ENCODE measurements at regions of chr4 and their contacts with region 1.

Region 1: GRCh38 chr4:145936142-145936996 is 2.3 kb downstream of the ZNF827 start:
- DNase-seq: peak; percentile 74 to 82 (median 78)
- ATAC-seq: peak; percentile 34 to 76 (median 66)
- H3K4me3 ChIP-seq: peak overlapping the region; percentile 70 to 93 (median 80)
- H3K27ac ChIP-seq: peak overlapping the region; percentile 92 to 99 (median 96)
- H3K4me1 ChIP-seq: peaks cover 0 to 31% (median 19%) of the 10 kb centered on the region in 12 donors
- H3K27me3 ChIP-seq: no peaks in the 10 kb centered on the region
- CTCF ChIP-seq: peak in 7 of 12 donors; percentile 10 to 28 (median 12)
- POLR2A ChIP-seq: peak in 1 of 2 donors; percentile 28

Region 2: DNA sequence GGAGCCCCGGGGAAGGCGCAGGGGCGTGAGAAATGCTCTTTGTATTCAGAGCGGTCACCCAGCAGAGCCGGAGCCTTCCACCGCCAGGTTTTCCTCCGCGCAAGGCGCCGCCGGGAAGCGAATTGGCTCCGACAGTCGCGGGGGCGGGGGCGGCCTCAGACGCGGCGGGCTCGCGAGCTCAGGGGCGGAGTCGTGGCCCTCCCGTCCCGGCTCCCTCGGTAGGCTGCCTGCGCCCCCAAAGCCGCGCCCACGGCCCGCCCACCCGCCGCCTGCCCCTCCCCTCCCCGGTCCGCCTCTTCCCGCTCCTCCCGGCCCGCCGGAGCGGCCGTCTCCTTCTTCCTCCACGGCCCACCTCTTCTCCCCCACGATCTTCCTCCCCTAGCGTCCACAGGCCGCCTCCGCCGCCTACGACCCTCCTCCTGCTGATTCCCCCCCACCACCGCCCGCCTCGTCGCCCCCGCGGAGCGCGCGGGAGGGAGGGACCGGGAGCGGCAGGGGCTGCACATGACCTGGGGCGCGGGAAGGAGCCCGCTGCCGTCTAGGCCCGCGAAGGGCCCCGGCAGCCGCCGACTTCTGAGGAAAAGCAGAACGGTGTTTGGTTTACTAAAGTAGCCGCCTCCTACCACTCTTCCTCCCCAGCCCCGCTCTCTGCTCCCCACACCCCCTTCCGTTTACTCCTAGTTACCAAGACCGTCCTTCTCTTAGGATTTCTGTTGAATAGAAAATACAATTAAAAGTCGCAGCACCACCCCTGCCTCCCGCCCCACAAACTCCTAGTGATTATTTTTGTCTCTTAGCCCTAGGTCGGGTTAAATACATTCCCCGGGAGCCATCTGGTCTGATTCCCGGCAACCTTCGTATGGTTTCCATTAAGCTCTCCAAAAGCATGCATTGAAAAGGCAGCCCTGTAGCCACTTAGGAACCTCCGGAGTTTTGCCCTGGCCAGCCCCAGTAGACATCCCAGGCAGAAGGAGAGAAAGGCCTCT is 203.2 kb before region 1 on chr4:
- intact Hi-C with region 1: loop called in 6 of 10 experiments (anchors 2 to 10 kb)
- DNase-seq: peak; percentile 97
- ATAC-seq: peak; percentile 81 to 96 (median 93)
- H3K4me3 ChIP-seq: peak overlapping the region; percentile 8 to 82 (median 66)
- H3K27ac ChIP-seq: peak overlapping the region; percentile 88 to 99 (median 96)
- H3K4me1 ChIP-seq: peaks cover 13 to 57% (median 46%) of the 10 kb centered on the region in 12 donors
- H3K27me3 ChIP-seq: no peaks in the 10 kb centered on the region
- CTCF ChIP-seq: peak in 3 of 12 donors; percentile 2 to 36 (median 14)
- POLR2A ChIP-seq: peak in 1 of 2 donors; percentile 76

Region 3: DNA sequence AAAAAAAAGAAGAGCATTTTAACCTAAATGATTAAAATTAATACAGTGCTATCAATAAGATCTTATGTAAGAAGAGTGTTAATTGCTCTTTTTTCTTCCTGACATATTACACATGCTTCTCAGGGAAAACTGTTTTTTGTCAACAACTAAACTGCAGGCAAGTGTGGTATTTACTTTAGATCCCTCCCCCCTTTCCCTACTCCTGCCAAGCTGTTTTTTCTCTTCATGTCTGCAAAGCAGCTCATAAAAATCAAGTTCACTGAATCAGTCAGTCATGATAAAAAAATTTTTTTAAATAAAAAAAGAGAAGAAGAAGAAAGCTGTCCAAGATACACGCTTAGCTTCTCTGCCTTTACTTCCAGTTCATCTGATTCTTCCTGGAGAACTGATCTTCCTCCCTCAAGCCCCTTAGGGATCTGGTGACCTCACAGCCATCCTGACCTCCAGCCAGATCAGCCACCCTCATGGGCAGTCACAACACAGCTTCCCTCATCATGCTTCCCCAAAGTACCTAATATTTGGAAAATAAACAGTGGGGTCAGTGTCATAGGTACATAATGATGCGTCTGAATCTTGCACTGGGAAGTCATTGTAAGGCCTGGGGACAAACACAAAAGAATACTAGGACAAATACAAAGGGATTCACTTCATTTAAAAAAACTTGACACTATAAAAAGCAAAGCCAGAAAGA is 84.7 kb before region 1 on chr4:
- intact Hi-C with region 1: loop called in 3 of 10 experiments (anchors 10 kb)
- DNase-seq: no peak
- ATAC-seq: peak in 1 of 4 donors; percentile 54
- H3K4me3 ChIP-seq: no peak overlapping the region
- H3K27ac ChIP-seq: peak overlapping the region in 2 of 12 donors; percentile 15 to 21
- H3K4me1 ChIP-seq: peaks cover 0 to 21% (median 15%) of the 10 kb centered on the region in 12 donors
- H3K27me3 ChIP-seq: no peaks in the 10 kb centered on the region
- CTCF ChIP-seq: no peak
- POLR2A ChIP-seq: no peak

Region 4: DNA sequence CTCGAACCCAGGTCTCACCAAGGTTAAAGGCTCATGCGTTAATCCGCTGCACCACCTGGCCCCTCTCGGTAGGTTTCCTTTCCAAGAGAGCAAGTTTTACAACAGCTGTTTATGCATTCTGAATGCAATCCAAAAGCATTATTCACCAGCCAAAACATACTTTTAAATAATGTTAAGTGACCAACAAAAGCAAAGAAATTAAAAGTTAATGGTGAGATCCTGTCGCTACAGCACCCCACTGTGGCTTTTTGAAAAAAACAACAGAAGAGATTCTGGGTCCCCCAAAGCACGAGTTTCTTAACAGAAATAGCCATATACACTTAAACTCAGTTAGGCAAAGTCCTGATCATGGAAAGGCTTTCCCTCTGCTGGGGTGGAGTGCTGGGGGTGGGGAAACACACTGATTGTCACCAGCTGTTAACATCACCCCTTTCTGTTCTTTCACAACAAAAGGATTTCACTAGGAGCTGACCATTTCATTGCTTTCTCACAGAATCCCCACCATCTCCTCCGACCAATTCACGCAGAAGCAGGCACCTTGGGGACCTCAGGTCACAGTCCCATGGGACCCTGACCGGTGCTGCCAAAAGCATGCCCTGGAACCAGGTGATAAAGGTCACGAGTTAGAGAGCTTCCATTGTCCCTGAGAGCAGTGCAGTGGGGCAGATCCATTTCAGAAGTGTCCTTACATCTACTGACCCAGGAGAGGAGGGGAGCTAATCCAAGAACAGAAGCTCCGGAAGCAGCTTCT is 49.0 kb before region 1 on chr4:
- intact Hi-C with region 1: loop called in 4 of 10 experiments (anchors 5 to 10 kb)
- DNase-seq: peak in 2 of 5 donors; percentile 25 to 45
- ATAC-seq: peak; percentile 38 to 78 (median 56)
- H3K4me3 ChIP-seq: peak overlapping the region in 1 of 12 donors; percentile 2
- H3K27ac ChIP-seq: peak overlapping the region in 10 of 12 donors; percentile 34 to 77 (median 54)
- H3K4me1 ChIP-seq: peaks cover 3 to 38% (median 20%) of the 10 kb centered on the region in 12 donors
- H3K27me3 ChIP-seq: no peaks in the 10 kb centered on the region
- CTCF ChIP-seq: peak in 7 of 12 donors; percentile 10 to 46 (median 35)
- POLR2A ChIP-seq: no peak

Region 5: DNA sequence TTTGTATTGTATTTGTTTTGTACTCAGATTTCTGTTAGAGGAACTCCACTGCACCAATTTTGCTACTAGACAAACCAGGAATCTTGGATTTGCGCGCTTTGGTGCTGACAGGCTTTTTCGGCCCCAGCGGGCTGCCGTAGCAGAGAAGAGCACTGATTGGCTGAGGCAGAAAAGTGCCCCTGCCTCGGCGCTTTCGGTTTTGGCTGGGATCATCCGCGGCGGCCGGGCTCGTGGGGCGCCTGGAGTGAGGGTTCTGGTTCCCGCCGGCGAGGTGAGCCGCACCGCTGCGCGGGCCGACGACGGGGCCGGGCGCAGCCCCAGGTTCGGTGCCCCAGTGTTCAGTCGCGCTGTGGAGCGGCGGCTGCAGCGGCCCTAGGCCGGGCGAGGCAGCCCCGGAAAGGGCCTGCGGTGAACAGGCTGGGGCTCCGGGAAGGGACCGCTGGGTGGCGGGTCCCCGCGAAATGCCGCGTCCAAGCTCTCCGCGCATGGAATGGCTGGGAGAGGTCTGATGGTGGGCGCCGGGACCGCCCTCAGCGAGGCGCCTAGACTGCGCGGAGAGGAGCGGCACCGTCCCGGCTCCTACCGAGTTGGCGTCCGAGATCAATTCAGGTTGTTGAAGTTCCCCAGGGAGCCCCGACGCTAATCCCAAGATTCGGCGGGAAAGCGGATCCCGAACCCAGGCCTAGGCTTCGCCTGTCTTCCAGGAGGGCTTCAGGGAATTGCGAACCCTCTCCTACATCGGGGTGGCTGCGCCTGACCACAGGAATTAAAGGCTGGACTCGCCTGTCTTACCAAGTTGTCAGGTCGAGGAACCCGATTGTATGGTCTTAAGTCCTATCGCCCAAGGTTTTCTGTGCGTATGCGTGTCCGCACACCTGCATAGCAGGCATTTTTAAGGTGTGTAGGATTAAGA is 239.4 kb after region 1 on chr4 and contains the start of gene LSM6:
- intact Hi-C with region 1: loop called in 3 of 10 experiments (anchors 2 to 10 kb)
- DNase-seq: peak; percentile 91 to 93 (median 92)
- ATAC-seq: peak; percentile 95 to 99 (median 98)
- H3K4me3 ChIP-seq: peak within 1 kb of the TSS; percentile 64 to 95 (median 88)
- H3K27ac ChIP-seq: peak within 1 kb of the TSS; percentile 77 to 95 (median 93)
- H3K4me1 ChIP-seq: peaks cover 0 to 47% (median 39%) of the 10 kb centered on the region in 12 donors
- H3K27me3 ChIP-seq: no peaks in the 10 kb centered on the region
- CTCF ChIP-seq: peak in 6 of 12 donors; percentile 13 to 37 (median 28)
- POLR2A ChIP-seq: peak in 1 of 2 donors; percentile 74
- total RNA-seq, gene LSM6: 9.9 to 18.5 (median 12.1) TPM